ENCODE measurements at regions of chr11 and their contacts with region 1.

Region 1: DNA sequence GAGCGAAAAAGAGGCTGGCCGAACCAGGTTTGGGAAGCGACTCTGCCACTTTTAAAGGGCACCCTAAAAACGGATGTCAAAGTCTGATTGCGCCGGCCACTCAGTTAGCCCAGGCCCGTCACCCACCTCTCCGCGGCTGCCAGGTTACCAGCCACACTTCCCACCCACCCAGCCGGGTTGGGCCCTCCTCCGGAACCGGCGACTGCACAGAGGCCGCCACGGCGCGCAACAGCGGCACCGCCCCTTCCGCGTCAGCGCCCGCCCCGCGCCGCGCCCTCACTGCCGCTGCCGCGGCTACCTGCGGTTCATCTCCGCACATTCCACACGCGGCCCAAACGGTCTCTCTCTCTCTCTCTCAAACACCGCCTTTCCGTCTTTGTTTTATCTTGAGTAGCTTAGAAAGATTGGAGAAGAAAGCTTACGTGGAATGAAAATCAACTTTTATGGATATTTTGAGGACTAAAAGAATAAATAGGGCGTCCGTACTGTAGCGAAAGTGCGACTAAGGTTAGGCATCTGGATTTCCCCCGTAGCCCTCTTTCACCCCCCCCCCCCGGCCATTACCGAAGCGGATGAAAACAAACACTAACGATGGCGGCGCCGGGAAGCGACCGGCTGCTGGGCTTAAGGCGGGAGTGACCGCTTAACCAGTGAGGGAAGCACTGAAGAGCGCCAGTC is at the starts of genes ATG13 and HARBI1:
- DNase-seq: peak; percentile 89 to 90
- H3K4me3 ChIP-seq: peak within 1 kb of the TSS; percentile 81 to 94 (median 89)
- H3K27ac ChIP-seq: peak within 1 kb of the TSS; percentile 87 to 97 (median 97)
- H3K4me1 ChIP-seq: peaks cover 11 to 26% of the 10 kb centered on the region in 2 donors
- H3K27me3 ChIP-seq: no peaks in the 10 kb centered on the region
- CTCF ChIP-seq: no peak
- POLR2A ChIP-seq: peak in 1 of 2 donors; percentile 55
- total RNA-seq, gene ATG13: 85.7 to 148 (median 113) TPM
- total RNA-seq, gene HARBI1: 1.3 to 6.2 (median 3.5) TPM

Region 2: GRCh38 chr11:46392421-46393230 is 224.5 kb before region 1 on chr11:
- intact Hi-C with region 1: loop called (anchors 10 kb)
- DNase-seq: peak; percentile 82 to 86
- H3K4me3 ChIP-seq: peak overlapping the region in 1 of 3 donors; percentile 25
- H3K27ac ChIP-seq: no peak overlapping the region
- H3K4me1 ChIP-seq: peaks cover 19 to 39% of the 10 kb centered on the region in 2 donors
- H3K27me3 ChIP-seq: peaks cover 14% of the 10 kb centered on the region
- CTCF ChIP-seq: no peak
- POLR2A ChIP-seq: no peak

Region 3: DNA sequence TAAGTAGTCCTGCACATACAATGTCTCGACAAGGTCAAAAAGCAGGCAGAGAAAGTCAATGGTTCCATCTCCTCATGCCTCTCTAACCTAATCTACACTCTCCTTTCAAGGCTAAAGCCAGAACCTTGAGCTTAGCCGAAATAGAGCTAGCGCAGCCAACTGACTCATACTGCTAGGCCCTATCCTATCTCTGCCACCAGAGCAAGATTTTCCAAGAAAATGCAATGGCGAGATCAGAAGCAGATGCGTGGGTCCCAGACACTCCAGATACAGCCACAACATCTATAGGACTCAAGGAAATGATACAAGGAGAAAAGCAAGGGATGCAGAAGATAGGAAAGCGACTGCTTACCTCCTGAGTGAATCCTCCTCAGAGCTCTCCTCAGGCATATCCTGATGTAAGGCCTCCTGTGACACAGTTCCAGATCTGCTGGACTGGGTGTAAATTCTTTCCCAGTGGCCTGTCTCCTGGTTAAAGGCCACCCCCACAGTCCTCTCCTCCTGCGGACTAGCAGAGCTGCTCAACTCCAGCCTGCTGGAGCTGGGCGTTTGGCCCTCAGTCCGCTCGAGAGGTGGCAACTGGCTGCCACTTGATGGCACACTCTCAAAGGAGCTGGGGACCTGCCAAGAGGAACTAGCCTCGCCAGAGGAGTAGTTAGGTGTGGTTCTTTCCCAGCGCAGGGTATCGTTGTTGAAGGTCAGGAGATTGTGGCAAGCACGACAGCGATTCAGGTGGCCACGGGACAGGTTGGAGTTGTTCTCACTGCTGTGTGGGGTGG is 75.4 kb before region 1 on chr11:
- intact Hi-C with region 1: loop called (anchors 10 kb)
- DNase-seq: peak; percentile 83 to 89
- H3K4me3 ChIP-seq: no peak overlapping the region
- H3K27ac ChIP-seq: peak overlapping the region in 1 of 3 donors; percentile 26
- H3K4me1 ChIP-seq: peaks cover 7 to 17% of the 10 kb centered on the region in 2 donors
- H3K27me3 ChIP-seq: no peaks in the 10 kb centered on the region
- CTCF ChIP-seq: no peak
- POLR2A ChIP-seq: no peak

Region 4: GRCh38 chr11:46669711-46670139 is 52.6 kb after region 1 on chr11:
- intact Hi-C with region 1: no loop called
- DNase-seq: no peak
- H3K4me3 ChIP-seq: no peak overlapping the region
- H3K27ac ChIP-seq: no peak overlapping the region
- H3K4me1 ChIP-seq: peaks cover 31 to 51% of the 10 kb centered on the region in 2 donors
- H3K27me3 ChIP-seq: no peaks in the 10 kb centered on the region
- CTCF ChIP-seq: no peak
- POLR2A ChIP-seq: no peak

Region 5: DNA sequence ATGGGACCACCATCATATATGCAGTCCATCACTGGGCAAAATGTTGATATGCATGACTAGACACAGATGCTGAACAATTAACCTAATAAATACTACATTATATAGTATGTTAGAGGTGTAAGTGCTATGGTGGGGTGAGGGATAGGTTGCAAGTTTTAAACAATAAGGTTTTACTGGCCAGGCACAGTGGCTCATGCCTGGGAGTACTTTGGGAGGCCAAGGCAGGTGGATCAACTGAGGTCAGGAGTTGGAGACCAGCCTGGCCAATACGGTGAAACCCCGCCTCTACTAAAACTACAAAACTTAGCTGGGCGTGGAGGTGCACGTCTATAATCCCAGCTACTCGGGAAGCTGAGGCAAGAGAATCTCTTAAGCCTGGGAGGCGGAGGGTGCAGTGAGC is 130.0 kb after region 1 on chr11:
- intact Hi-C with region 1: no loop called
- DNase-seq: no peak
- H3K4me3 ChIP-seq: no peak overlapping the region
- H3K27ac ChIP-seq: no peak overlapping the region
- H3K4me1 ChIP-seq: no peaks in the 10 kb centered on the region
- H3K27me3 ChIP-seq: no peaks in the 10 kb centered on the region
- CTCF ChIP-seq: no peak
- POLR2A ChIP-seq: no peak